Gastrocnemius medialis (tissue), 4 donors: ENCODE measurements at regions of chr15 and their contacts with region 1.

Region 1: DNA sequence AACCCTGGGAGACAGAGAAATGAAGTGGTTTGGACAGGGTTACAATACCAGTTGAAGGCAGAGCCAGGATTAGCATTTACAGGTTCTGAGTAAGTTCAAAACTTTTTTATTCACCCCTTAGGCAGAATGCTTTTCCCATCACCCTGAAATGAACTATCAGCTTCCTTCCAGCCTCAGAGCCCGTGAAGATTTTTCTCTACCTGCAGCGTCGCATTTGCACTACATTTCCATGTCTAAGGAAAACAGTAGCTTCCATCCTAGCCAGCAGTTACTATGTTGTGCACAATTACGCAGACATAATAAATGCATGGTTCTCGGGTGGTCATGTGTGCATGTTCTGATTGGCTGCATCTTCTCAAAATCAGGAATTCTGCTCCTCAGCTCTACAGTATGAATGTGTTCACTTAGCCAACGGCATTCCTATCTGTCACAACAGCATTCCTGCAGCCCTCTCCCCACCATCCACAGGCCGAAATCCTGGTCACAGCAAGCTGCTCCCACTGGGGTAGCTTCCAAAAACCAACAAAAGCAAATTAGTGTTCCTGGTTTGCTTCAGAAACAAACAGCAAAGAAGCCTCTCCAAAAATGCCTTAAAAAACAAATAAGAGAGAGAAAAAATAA is 510.8 kb upstream of the SEMA6D start:
- DNase-seq: no peak
- ATAC-seq: no peak
- H3K4me3 ChIP-seq: no peak overlapping the region
- H3K27ac ChIP-seq: no peak overlapping the region
- H3K4me1 ChIP-seq: no peaks in the 10 kb centered on the region
- H3K27me3 ChIP-seq: no peaks in the 10 kb centered on the region
- CTCF ChIP-seq: no peak
- POLR2A ChIP-seq: no peak

Region 2: GRCh38 chr15:47196057-47196456 is 10.4 kb before region 1 on chr15:
- in situ Hi-C with region 1: no loop called
- intact Hi-C with region 1: no loop called
- DNase-seq: peak; percentile 57 to 65
- ATAC-seq: peak; percentile 93 to 97
- H3K4me3 ChIP-seq: no peak overlapping the region
- H3K27ac ChIP-seq: no peak overlapping the region
- H3K4me1 ChIP-seq: no peaks in the 10 kb centered on the region
- H3K27me3 ChIP-seq: no peaks in the 10 kb centered on the region
- CTCF ChIP-seq: peak; percentile 64 to 82 (median 76)
- POLR2A ChIP-seq: no peak

Region 3: DNA sequence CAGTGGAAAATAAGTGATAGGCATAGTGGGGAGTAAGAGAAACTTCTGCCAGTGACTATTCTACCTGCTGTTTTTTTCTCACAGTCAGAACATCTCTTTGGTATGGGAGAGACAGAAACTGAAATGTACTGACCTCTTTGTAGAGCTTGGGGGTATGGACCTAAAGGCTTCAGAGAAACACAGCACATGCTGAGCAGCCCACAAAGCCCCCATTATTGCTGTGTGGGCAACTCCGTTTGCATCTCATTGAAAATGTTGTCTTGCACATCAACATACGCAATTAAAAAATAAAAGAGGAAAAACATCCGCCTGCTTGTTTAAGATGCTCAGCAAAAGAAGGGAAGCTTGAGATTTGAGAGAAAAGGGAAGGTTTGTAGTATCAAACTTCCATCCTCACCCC is 67.4 kb after region 1 on chr15:
- in situ Hi-C with region 1: no loop called
- intact Hi-C with region 1: no loop called
- DNase-seq: no peak
- ATAC-seq: no peak
- H3K4me3 ChIP-seq: no peak overlapping the region
- H3K27ac ChIP-seq: no peak overlapping the region
- H3K4me1 ChIP-seq: no peaks in the 10 kb centered on the region
- H3K27me3 ChIP-seq: no peaks in the 10 kb centered on the region
- CTCF ChIP-seq: no peak
- POLR2A ChIP-seq: no peak

Region 4: GRCh38 chr15:47473832-47474231 is 267.4 kb after region 1 on chr15:
- in situ Hi-C with region 1: loop called in 1 of 4 experiments (anchors 25 kb)
- intact Hi-C with region 1: no loop called
- DNase-seq: peak in 1 of 2 donors; percentile 40
- ATAC-seq: peak; percentile 64 to 76
- H3K4me3 ChIP-seq: no peak overlapping the region
- H3K27ac ChIP-seq: no peak overlapping the region
- H3K4me1 ChIP-seq: peaks cover 9 to 20% of the 10 kb centered on the region in 2 donors
- H3K27me3 ChIP-seq: no peaks in the 10 kb centered on the region
- CTCF ChIP-seq: no peak
- POLR2A ChIP-seq: no peak

Region 5: GRCh38 chr15:47711654-47712053 is 505.2 kb after region 1 on chr15:
- in situ Hi-C with region 1: loop called in 1 of 4 experiments (anchors 10 kb)
- intact Hi-C with region 1: no loop called
- DNase-seq: no peak
- ATAC-seq: no peak
- H3K4me3 ChIP-seq: no peak overlapping the region
- H3K27ac ChIP-seq: no peak overlapping the region
- H3K4me1 ChIP-seq: peaks cover 3 to 4% of the 10 kb centered on the region in 2 donors
- H3K27me3 ChIP-seq: no peaks in the 10 kb centered on the region
- CTCF ChIP-seq: peak; percentile 31 to 66 (median 40)
- POLR2A ChIP-seq: no peak